OCI-LY7 (cell line): ENCODE measurements at regions of chr4 and their contacts with region 1.

Region 1: DNA sequence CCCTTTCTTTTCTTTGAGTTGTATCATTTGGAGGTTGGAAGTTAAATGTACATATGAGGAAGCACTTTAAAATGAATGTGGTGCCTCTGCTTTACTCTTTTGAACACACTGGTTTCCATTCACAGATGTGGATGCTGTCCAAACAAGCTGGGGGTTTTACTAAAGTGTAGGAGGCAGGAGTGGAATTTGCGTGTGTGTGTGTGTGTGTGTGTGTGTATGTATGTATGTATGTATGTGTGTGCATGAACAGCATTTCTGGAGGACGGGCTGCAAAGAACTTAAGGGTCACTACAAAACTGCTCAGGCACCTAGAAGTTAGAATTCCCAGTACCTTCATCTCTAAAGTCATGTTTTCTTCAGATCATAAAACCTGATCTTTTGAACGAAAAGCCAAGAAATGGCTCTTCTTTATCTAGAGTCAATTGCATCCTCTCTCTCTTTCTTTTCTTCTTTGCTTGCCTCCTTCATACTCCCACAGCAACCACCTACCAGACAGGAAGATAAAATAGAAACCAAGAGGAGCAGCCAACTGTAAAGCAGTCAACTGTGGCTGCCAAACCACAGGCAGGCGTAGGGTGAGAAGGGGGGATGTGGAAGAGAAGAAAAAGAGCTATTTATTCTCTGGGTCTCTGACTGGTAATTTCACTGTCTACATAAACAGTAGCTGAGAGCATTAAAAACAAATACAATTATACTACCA is 177.0 kb upstream of the RASGEF1B start:
- DNase-seq: peak; percentile 88
- H3K4me3 ChIP-seq: peak overlapping the region; percentile 52
- H3K27ac ChIP-seq: peak overlapping the region; percentile 90
- H3K4me1 ChIP-seq: peaks cover 65% of the 10 kb centered on the region
- CTCF ChIP-seq: no peak

Region 2: DNA sequence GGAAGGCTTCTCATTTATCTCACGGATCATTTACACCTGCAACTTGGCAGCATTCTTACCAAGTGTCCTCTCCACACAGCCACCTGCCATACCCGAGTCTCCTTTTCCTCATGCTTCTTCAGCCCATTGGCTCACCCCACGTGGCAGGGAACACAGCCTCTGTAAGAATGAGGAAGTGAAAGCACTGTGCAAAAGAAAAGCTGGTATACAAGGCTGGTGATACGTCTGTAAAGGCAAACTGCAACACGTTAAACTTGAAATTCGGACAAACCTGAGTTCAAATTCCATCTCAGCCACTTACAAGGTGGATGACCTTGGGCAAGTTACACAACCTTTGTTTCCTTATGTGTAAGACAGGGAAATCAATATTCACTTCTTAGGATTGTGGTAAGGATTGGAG is 13.0 kb before region 1 on chr4:
- CTCF ChIA-PET with region 1: no interaction called
- POLR2A ChIA-PET with region 1: interaction called, 18 read pairs
- intact Hi-C with region 1: no loop called
- DNase-seq: peak; percentile 96
- H3K4me3 ChIP-seq: peak overlapping the region; percentile 40
- H3K27ac ChIP-seq: peak overlapping the region; percentile 85
- H3K4me1 ChIP-seq: peaks cover 53% of the 10 kb centered on the region
- CTCF ChIP-seq: no peak

Region 3: DNA sequence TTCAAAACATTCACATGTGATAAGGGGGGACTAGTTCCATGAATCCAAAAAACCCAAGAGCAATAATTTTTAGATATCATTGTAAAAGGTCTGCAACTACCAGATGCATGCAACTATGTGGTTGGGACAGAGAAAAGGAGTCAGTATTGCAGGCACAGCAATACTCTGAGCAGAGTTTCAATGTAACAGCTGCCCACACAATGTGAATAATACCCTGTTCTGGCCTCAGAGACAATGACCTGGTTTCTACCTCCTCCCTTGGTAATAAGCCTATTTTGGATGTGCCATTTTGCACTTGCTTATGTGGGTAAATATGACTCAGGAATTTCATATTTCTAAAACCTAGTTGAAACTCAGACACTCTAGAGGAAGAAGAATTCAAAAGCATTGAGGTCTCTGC is 17.8 kb after region 1 on chr4:
- CTCF ChIA-PET with region 1: no interaction called
- POLR2A ChIA-PET with region 1: interaction called, 13 read pairs
- intact Hi-C with region 1: no loop called
- DNase-seq: no peak
- H3K4me3 ChIP-seq: no peak overlapping the region
- H3K27ac ChIP-seq: no peak overlapping the region
- H3K4me1 ChIP-seq: peaks cover 4% of the 10 kb centered on the region
- CTCF ChIP-seq: no peak